ENCODE measurements at regions of chr6 and their contacts with region 1.

Region 1: GRCh38 chr6:37691904-37692806 is 5.5 kb downstream of the MDGA1 start:
- DNase-seq: peak; percentile 64 to 90 (median 81)
- ATAC-seq: peak; percentile 83
- H3K4me3 ChIP-seq: no peak overlapping the region
- H3K4me3 Mint-ChIP-seq: no peak overlapping the region
- H3K27ac ChIP-seq: no peak overlapping the region
- H3K27ac Mint-ChIP-seq: no peak overlapping the region
- H3K4me1 ChIP-seq: peaks cover 16% of the 10 kb centered on the region
- H3K4me1 Mint-ChIP-seq: peaks cover 10% of the 10 kb centered on the region
- H3K27me3 ChIP-seq: peaks cover 6 to 25% of the 10 kb centered on the region in 2 experiments
- H3K27me3 Mint-ChIP-seq: peaks cover 21% of the 10 kb centered on the region
- CTCF ChIP-seq: peak; percentile 92

Region 2: DNA sequence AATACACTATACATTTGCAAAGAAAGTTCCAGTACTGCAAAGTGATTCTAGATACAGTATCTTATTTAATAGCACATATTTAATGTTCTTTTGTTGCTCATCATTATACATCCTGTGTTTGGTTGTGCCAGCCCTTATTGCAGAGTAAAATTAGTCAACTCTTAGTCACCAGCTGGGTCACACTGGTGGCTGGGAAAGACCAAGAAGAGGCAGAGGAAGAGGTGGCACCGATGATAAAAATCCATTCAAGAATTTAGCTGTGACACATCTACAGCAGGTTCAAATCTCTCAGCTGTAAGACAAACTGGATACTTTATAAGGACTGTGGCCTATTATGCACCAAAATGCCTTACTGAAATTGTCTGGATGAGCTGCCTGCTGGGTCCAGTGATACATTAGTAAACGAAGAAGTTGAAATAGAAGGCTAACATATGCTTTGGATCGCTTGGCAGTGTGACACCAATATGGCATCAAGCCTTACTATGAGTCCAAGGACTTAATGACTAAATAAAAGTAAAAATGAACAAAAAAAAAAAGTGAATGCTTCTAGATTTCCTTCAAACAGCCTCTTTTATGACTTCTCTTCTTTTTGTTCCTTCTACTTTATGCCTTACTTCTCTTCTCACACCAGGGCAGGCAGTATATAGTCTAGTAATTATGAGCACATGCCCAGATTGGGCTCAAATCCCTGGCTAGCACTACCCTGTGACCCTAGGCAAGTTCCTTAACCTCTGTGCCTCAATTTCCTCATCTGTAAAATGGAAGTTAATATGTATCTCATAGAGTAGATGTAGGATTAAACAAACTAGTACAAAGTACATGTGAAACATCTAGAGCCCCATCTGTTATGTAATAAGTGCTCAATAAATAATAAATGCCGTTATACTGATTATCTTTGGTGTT is 367.8 kb before region 1 on chr6:
- CTCF ChIA-PET with region 1: interaction called, 11 read pairs
- POLR2A ChIA-PET with region 1: no interaction called
- intact Hi-C with region 1: loop called in 1 of 2 experiments (anchors 1 kb)
- DNase-seq: no peak
- ATAC-seq: no peak
- H3K4me3 ChIP-seq: no peak overlapping the region
- H3K4me3 Mint-ChIP-seq: no peak overlapping the region
- H3K27ac ChIP-seq: no peak overlapping the region
- H3K27ac Mint-ChIP-seq: no peak overlapping the region
- H3K4me1 ChIP-seq: no peaks in the 10 kb centered on the region
- H3K4me1 Mint-ChIP-seq: no peaks in the 10 kb centered on the region
- H3K27me3 ChIP-seq: no peaks in the 10 kb centered on the region
- H3K27me3 Mint-ChIP-seq: no peaks in the 10 kb centered on the region
- CTCF ChIP-seq: no peak

Region 3: GRCh38 chr6:37483917-37484785 is 208.0 kb before region 1 on chr6:
- CTCF ChIA-PET with region 1: interaction called, 18 read pairs
- POLR2A ChIA-PET with region 1: interaction called, 4 read pairs
- intact Hi-C with region 1: loop called (anchors 1 kb)
- DNase-seq: peak; percentile 59 to 90 (median 77)
- ATAC-seq: peak; percentile 93
- H3K4me3 ChIP-seq: no peak overlapping the region
- H3K4me3 Mint-ChIP-seq: no peak overlapping the region
- H3K27ac ChIP-seq: peak overlapping the region in 1 of 2 experiments; percentile 47
- H3K27ac Mint-ChIP-seq: no peak overlapping the region
- H3K4me1 ChIP-seq: peaks cover 14% of the 10 kb centered on the region
- H3K4me1 Mint-ChIP-seq: peaks cover 13% of the 10 kb centered on the region
- H3K27me3 ChIP-seq: no peaks in the 10 kb centered on the region
- H3K27me3 Mint-ChIP-seq: no peaks in the 10 kb centered on the region
- CTCF ChIP-seq: peak; percentile 93

Region 4: DNA sequence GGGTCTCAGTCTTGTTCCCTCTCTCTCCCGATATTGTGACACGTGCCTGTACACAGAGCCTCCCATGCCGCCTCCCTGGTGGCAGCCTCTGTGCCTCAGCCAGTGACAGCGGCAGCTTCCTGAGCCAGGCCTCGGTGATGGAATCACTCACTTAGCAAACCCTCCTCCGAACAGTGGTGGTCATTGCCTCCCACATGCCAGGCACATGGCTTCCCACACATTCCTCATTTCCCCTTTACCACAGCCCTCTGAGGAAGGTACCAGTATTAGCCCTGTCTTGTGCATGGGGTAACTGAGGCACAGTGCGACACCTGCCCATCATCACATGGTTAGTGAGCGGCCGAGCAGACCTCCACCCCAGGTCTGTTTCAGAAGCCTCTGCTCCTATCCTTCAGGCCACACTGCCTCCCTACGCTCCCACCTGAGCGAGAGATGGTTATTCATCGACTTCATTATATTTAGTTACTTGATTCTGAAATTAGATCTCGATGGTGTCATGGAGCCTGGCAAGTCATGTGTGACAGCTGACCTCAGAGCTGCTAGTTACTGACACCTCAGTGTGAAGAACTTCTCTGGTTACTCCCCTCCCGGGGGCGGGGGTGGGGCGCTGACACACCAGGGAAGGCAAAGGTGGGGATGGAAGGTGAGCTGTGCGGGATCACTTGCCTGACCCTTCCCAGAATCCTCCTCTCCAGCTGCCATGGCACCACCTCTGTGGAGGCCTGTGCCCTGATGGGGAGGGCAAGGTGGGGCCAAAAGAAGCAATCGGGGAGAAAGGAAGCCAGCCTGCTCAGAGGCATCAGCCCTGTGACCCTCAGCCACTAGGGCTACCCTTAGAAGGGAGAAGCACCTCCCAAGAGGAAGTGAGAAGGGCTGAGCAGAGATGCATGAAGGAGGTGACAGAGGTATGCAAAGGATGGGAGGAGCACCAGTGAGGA is 12.3 kb before region 1 on chr6:
- CTCF ChIA-PET with region 1: interaction called, 19 read pairs
- POLR2A ChIA-PET with region 1: no interaction called
- intact Hi-C with region 1: no loop called
- DNase-seq: no peak
- ATAC-seq: no peak
- H3K4me3 ChIP-seq: no peak overlapping the region
- H3K4me3 Mint-ChIP-seq: no peak overlapping the region
- H3K27ac ChIP-seq: no peak overlapping the region
- H3K27ac Mint-ChIP-seq: no peak overlapping the region
- H3K4me1 ChIP-seq: no peaks in the 10 kb centered on the region
- H3K4me1 Mint-ChIP-seq: no peaks in the 10 kb centered on the region
- H3K27me3 ChIP-seq: no peaks in the 10 kb centered on the region
- H3K27me3 Mint-ChIP-seq: no peaks in the 10 kb centered on the region
- CTCF ChIP-seq: no peak

Region 5: GRCh38 chr6:37741757-37742400 is 49.7 kb after region 1 on chr6:
- CTCF ChIA-PET with region 1: no interaction called
- POLR2A ChIA-PET with region 1: no interaction called
- intact Hi-C with region 1: no loop called
- DNase-seq: peak in 1 of 9 experiments; percentile 11
- ATAC-seq: no peak
- H3K4me3 ChIP-seq: no peak overlapping the region
- H3K4me3 Mint-ChIP-seq: no peak overlapping the region
- H3K27ac ChIP-seq: no peak overlapping the region
- H3K27ac Mint-ChIP-seq: no peak overlapping the region
- H3K4me1 ChIP-seq: no peaks in the 10 kb centered on the region
- H3K4me1 Mint-ChIP-seq: no peaks in the 10 kb centered on the region
- H3K27me3 ChIP-seq: no peaks in the 10 kb centered on the region
- H3K27me3 Mint-ChIP-seq: peaks cover 19% of the 10 kb centered on the region
- CTCF ChIP-seq: no peak

Region 6: GRCh38 chr6:38493931-38494547 is 801.9 kb after region 1 on chr6:
- CTCF ChIA-PET with region 1: no interaction called
- POLR2A ChIA-PET with region 1: no interaction called
- intact Hi-C with region 1: loop called in 1 of 2 experiments (anchors 1 kb)
- DNase-seq: peak; percentile 57 to 85 (median 76)
- ATAC-seq: peak; percentile 46
- H3K4me3 ChIP-seq: no peak overlapping the region
- H3K4me3 Mint-ChIP-seq: no peak overlapping the region
- H3K27ac ChIP-seq: no peak overlapping the region
- H3K27ac Mint-ChIP-seq: no peak overlapping the region
- H3K4me1 ChIP-seq: no peaks in the 10 kb centered on the region
- H3K4me1 Mint-ChIP-seq: no peaks in the 10 kb centered on the region
- H3K27me3 ChIP-seq: no peaks in the 10 kb centered on the region
- H3K27me3 Mint-ChIP-seq: no peaks in the 10 kb centered on the region
- CTCF ChIP-seq: peak; percentile 99

Region 7: GRCh38 chr6:38671885-38672467 is 979.8 kb after region 1 on chr6:
- CTCF ChIA-PET with region 1: no interaction called
- POLR2A ChIA-PET with region 1: no interaction called
- intact Hi-C with region 1: loop called in 1 of 2 experiments (anchors 10 kb)
- DNase-seq: peak in 4 of 9 experiments; percentile 24 to 70 (median 43)
- ATAC-seq: peak; percentile 74
- H3K4me3 ChIP-seq: no peak overlapping the region
- H3K4me3 Mint-ChIP-seq: no peak overlapping the region
- H3K27ac ChIP-seq: no peak overlapping the region
- H3K27ac Mint-ChIP-seq: no peak overlapping the region
- H3K4me1 ChIP-seq: peaks cover 6% of the 10 kb centered on the region
- H3K4me1 Mint-ChIP-seq: peaks cover 6% of the 10 kb centered on the region
- H3K27me3 ChIP-seq: no peaks in the 10 kb centered on the region
- H3K27me3 Mint-ChIP-seq: no peaks in the 10 kb centered on the region
- CTCF ChIP-seq: peak; percentile 75

Measured in CD8-positive, alpha-beta T cell (primary cell).